Left cardiac atrium (tissue), 4 donors: ENCODE measurements at regions of chr14 and their contacts with region 1.

Region 1: DNA sequence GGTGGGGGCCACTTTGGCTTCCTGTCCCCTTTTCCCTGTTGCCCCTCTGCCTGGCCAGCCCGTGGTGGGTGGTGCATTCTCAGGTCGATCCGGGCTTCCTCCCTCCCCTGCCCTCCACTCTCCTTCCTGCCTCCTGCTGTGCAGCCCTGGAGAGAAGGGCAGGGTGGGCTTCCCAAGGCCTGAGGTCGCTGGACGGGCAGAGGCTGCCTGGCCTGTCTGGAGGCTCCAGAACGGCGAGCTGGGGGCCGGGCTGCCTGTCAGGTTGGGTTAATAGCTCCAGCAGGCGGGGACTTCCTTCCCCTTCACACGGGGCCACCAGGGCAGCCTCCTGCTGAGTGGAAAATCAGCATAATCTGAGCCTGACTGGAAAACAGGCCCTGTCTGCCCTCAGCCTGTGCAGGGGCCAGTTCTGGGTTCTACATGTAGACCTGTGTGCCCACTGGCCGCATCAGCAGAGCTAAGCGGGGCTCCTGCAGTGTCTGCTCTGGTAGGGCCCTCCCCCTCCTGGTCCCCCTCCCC is 11.3 kb downstream of the KIF26A start:
- DNase-seq: peak; percentile 70
- ATAC-seq: peak; percentile 42 to 56

Region 2: DNA sequence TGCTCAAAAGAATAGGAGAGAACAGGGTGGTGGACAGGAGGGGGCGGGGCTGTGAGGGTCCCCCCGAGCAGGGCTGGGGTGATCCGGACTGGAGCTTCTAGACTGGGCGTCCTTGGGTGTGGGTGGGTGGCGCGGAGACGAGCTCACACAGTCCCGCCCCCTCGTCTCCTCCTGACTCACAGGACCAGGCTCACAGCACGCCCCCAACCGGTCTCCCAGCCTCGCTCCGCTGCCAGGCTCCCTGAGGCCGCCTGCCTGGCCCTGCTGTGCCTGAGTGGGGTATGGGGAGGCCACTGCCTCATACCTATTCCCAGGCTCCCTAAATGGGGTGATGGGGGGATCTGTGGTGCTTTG is 41.5 kb before region 1 on chr14:
- intact Hi-C with region 1: no loop called
- DNase-seq: peak; percentile 22
- ATAC-seq: no peak

Region 3: DNA sequence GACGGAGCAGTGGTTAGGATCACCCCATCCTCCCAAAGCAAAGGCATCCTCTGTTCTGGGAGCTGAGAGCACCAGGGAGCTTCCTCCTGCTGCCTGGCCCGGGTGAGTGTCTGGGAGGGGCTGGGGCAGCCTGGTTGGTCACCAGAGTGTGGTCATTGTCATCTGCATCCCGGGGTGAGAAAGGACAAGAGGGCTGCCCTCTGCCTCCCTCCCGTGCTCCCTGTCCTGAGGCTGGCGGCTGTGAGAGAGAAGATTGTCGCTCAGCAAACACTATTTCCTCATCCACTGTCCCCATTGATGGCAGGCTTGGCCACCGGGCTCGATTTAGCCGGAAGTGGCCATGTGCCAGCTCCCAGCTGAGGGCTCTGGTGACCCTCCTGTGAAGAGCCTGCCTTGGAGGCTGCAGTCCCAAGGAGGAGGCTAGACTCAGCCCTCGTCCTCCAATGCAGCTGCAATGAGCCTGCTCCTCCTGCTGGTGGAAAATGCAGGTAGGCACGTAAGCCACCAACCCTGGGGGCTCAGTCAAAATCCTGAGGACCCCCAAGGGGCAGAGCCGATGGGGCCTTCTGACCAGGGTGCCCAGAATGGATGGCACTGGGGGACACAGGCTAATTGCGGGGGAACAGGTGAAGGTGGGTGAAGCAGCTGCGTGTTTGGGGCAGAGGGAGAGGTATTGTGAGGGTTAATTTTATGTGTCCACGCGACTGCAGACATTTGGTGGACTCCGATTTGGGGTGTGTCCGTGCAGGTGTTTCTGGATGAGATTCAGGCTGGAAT is 144.4 kb after region 1 on chr14:
- intact Hi-C with region 1: no loop called
- DNase-seq: peak; percentile 20
- ATAC-seq: no peak

Region 4: GRCh38 chr14:104370256-104370870 is 220.7 kb after region 1 on chr14:
- intact Hi-C with region 1: loop called in 1 of 2 experiments (anchors 10 kb)
- DNase-seq: peak; percentile 23
- ATAC-seq: peak; percentile 31 to 70

Region 5: GRCh38 chr14:104443391-104444158 is 293.9 kb after region 1 on chr14:
- intact Hi-C with region 1: no loop called
- DNase-seq: no peak
- ATAC-seq: no peak